Activated CD4-positive, alpha-beta T cell treated with anti-CD3 and anti-CD28 coated beads for 36 hours (primary cell): ENCODE measurements at regions of chr12 and their contacts with region 1.

Region 1: GRCh38 chr12:109880016-109880931 is at the start of gene GLTP:
- DNase-seq: peak; percentile 93
- ATAC-seq: peak; percentile 97
- H3K4me3 Mint-ChIP-seq: peak within 1 kb of the TSS; percentile 86
- H3K27ac Mint-ChIP-seq: peak within 1 kb of the TSS; percentile 88
- H3K4me1 Mint-ChIP-seq: peaks cover 36% of the 10 kb centered on the region
- H3K27me3 Mint-ChIP-seq: no peaks in the 10 kb centered on the region
- total RNA-seq, gene GLTP: 24.2 to 26.9 TPM

Region 2: GRCh38 chr12:109428037-109428629 is 452.1 kb before region 1 on chr12:
- CTCF ChIA-PET with region 1: no interaction called
- POLR2A ChIA-PET with region 1: no interaction called
- intact Hi-C with region 1: loop called in 1 of 2 experiments (anchors 1 kb)
- DNase-seq: peak; percentile 86
- ATAC-seq: peak; percentile 82
- H3K4me3 Mint-ChIP-seq: no peak overlapping the region
- H3K27ac Mint-ChIP-seq: no peak overlapping the region
- H3K4me1 Mint-ChIP-seq: peaks cover 2% of the 10 kb centered on the region
- H3K27me3 Mint-ChIP-seq: peaks cover 6% of the 10 kb centered on the region

Region 3: GRCh38 chr12:109597795-109598427 is 282.4 kb before region 1 on chr12:
- CTCF ChIA-PET with region 1: no interaction called
- POLR2A ChIA-PET with region 1: no interaction called
- intact Hi-C with region 1: loop called in 1 of 2 experiments (anchors 5 kb)
- DNase-seq: peak; percentile 80
- ATAC-seq: peak; percentile 51
- H3K4me3 Mint-ChIP-seq: no peak overlapping the region
- H3K27ac Mint-ChIP-seq: no peak overlapping the region
- H3K4me1 Mint-ChIP-seq: peaks cover 31% of the 10 kb centered on the region
- H3K27me3 Mint-ChIP-seq: no peaks in the 10 kb centered on the region

Region 4: GRCh38 chr12:109844983-109845823 is 35.1 kb before region 1 on chr12:
- CTCF ChIA-PET with region 1: interaction called, 11 read pairs
- POLR2A ChIA-PET with region 1: no interaction called
- intact Hi-C with region 1: loop called in 1 of 2 experiments (anchors 1 kb)
- DNase-seq: peak; percentile 95
- ATAC-seq: peak; percentile 99
- H3K4me3 Mint-ChIP-seq: peak overlapping the region; percentile 21
- H3K27ac Mint-ChIP-seq: no peak overlapping the region
- H3K4me1 Mint-ChIP-seq: peaks cover 4% of the 10 kb centered on the region
- H3K27me3 Mint-ChIP-seq: no peaks in the 10 kb centered on the region

Region 5: DNA sequence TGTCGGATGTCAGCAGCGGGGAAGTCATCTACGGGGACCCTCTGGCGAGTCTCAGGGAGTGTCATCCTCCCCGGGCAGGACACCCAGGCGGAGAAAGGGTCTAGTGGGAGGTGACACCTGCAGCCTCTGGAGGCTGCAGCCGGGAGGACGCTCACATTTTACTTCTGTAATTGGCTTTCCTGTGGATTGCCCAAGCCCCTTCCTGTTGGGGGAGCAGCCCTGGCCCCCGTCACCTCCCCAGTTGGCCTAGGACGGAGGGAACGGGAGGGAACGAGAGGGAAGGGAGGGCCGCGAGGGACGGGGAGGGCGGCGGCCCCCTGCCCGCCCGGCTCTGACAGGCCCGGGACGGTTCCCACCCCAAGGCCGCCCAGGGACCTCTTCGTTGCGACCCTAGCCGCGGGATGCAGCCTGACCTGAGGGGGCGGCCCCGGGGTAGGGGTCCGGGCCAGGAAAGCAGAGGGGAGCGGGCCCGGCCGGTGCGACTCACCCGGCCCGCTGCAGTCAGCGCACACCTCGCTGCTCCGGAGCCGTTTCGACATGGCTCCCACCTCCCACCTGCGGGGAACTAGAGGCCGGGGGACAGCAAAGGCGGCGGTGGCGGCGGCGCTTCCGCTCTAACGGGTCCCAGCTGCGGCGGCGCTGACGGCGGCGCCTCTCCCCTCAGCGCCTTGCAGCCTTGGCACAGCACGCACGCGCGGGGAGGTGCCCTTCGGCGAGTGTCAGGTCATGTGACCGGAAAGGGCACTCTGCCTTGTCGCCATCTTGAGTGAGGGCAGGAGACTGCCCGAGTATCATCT is 115.6 kb after region 1 on chr12 and contains the start of gene GIT2:
- CTCF ChIA-PET with region 1: no interaction called
- POLR2A ChIA-PET with region 1: no interaction called
- intact Hi-C with region 1: loop called in 1 of 2 experiments (anchors 1 kb)
- DNase-seq: peak; percentile 98
- ATAC-seq: peak; percentile 85
- H3K4me3 Mint-ChIP-seq: peak within 1 kb of the TSS; percentile 99
- H3K27ac Mint-ChIP-seq: peak within 1 kb of the TSS; percentile 97
- H3K4me1 Mint-ChIP-seq: peaks cover 65% of the 10 kb centered on the region
- H3K27me3 Mint-ChIP-seq: no peaks in the 10 kb centered on the region
- total RNA-seq, gene GIT2: 50.2 to 58.2 TPM

Region 6: GRCh38 chr12:110159671-110160245 is 279.5 kb after region 1 on chr12:
- CTCF ChIA-PET with region 1: no interaction called
- POLR2A ChIA-PET with region 1: no interaction called
- intact Hi-C with region 1: no loop called
- DNase-seq: no peak
- ATAC-seq: no peak
- H3K4me3 Mint-ChIP-seq: no peak overlapping the region
- H3K27ac Mint-ChIP-seq: no peak overlapping the region
- H3K4me1 Mint-ChIP-seq: peaks cover 7% of the 10 kb centered on the region
- H3K27me3 Mint-ChIP-seq: no peaks in the 10 kb centered on the region

Region 7: DNA sequence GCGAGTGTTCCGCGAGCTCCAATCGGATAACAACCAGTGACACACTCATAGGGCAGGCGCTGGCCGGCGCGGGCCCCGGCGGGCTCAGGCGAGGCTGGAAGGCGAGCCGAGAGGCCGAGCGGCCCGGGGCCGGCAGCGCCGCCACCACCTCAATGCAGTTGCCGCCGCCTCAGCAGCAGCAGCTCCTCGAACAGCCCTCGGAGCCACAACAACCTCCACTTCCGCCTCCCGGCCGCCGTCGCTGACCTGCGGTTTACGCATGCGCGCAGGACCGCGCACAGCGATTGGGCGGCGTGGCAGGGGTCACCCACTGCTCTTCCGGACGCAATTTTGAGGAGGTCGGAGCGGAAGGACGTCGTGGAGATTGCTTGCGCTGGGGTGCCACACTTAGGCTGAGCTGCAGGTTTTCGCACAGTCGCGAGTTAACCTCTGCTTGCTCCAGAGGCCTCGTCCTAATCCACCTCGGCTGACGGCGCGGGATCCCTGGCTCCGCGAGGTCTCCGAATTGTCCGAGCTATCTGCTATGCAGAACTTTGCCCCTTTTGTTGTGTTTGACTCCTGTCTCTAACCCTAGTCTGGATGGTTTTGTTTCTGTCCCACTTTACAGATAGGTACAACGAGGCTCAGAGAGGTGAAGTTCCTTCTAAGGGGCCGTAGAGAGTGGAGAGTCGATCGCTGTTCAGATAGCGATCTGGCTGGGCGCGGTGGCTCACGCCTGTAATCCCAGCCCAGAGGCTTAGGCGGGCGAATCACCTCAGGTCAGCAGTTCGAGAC is 1805.7 kb after region 1 on chr12 and contains the starts of genes ACAD10 and BRAP:
- CTCF ChIA-PET with region 1: no interaction called
- POLR2A ChIA-PET with region 1: no interaction called
- intact Hi-C with region 1: loop called in 1 of 2 experiments (anchors 10 kb)
- DNase-seq: peak; percentile 95
- ATAC-seq: peak; percentile 97
- H3K4me3 Mint-ChIP-seq: peak within 1 kb of the TSS; percentile 89
- H3K27ac Mint-ChIP-seq: peak within 1 kb of the TSS; percentile 91
- H3K4me1 Mint-ChIP-seq: peaks cover 31% of the 10 kb centered on the region
- H3K27me3 Mint-ChIP-seq: no peaks in the 10 kb centered on the region
- total RNA-seq, gene ACAD10: 25.5 to 27.5 TPM
- total RNA-seq, gene BRAP: 18.3 to 23.6 TPM